ENCODE measurements at regions of chr10 and their contacts with region 1.

Region 1: GRCh38 chr10:28250782-28251181 is 52.1 kb downstream of the MPP7 start:
- DNase-seq: no peak
- H3K4me3 ChIP-seq: no peak overlapping the region
- H3K27ac ChIP-seq: no peak overlapping the region
- H3K4me1 ChIP-seq: no peaks in the 10 kb centered on the region
- H3K27me3 ChIP-seq: no peaks in the 10 kb centered on the region
- CTCF ChIP-seq: peak in 2 of 3 donors; percentile 56 to 57
- EP300 ChIP-seq: no peak
- POLR2A ChIP-seq: no peak

Region 2: DNA sequence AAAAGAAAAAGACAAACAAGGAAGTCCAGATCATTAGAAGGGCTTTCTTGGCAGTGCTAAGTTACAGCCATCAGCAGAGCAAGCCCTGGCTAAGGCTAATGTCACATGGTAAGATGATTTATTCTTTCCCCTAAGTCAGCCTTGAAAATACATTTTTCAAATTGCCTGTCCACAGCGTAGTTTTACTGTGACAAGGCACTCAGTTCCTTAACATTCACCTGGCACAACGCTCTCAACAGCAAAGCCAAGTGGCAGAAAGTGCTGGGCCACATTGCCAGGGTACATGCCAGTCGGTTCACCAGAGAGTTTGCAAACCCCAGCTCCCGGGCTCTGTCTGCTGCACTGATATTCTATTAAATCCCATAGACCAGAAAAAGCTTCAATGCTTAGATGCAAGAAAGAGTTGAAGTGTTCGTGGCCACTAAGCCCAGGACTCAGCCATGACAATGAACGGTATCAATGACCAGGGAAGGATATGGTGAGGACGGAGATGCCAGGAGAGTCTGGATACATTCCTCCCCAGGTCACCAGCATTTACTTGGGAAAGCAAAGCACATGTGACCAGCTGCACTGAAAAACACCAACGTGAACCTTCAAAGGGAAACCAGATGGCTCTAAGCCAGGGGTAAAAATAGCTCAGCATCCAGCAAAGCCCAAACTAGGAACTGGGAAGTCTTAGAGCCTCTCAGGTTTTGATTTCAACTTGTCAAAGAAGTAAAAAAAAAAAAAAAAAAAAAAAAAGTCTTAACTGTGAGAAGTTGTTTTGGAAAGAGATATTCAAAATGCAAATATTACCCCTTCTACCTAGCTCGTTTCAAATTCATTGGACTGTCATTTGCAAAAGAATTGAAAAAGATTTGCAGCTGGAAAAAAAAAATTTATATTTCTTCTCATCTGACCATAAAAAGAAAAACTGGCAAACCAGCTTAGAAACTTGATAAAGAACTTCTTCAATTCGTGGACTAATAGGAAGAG is 76.0 kb after region 1 on chr10:
- intact Hi-C with region 1: no loop called
- DNase-seq: peak in 4 of 5 donors; percentile 25 to 68 (median 34)
- H3K4me3 ChIP-seq: no peak overlapping the region
- H3K27ac ChIP-seq: peak overlapping the region; percentile 13 to 41
- H3K4me1 ChIP-seq: peaks cover 5% of the 10 kb centered on the region
- H3K27me3 ChIP-seq: no peaks in the 10 kb centered on the region
- CTCF ChIP-seq: no peak
- EP300 ChIP-seq: no peak
- POLR2A ChIP-seq: no peak

Region 3: DNA sequence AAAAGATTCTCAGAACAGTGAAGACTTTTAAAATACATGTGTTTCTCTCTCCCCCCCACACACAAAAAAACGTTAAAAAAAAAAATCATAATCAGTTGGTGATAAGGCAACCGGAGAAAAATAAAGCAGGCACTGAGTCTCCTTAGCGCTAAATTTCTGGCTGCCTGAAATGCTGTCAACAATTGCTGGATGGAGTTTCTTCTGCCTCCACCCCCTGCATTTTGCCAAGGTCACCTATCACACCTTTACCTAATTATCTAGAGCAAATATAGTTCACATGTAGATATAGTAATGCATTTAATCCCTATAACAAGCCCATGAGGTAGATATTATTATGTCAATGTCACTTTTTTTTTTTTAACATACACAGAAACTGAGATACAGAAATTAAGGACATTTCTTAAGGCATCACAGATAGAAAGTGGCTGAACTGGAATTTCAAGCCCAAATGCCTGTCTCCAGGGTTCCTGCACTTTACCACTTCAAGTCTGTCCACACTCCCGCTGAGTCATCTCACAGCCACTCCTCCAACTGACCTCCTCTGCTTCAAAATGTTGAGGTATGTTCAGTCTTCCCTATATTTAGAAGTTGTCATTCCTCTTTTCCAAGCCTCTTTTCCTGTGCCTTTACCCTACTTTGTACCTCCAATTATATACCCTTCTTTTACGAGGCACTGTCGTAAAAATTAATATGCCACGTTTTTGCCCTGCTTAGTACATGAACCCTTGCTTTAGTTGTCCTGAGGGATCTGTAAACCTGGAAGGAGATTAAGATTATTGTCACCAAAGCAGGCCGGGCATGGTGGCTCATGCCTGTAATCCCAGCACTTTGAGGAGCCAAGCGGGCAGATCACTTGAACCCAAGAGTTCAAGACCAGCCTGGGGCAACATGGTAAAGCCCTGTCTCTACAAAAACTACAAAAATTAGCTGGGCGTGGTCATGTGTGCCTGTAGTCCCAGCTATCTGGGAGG is 124.9 kb after region 1 on chr10:
- intact Hi-C with region 1: loop called (anchors 5 kb)
- DNase-seq: no peak
- H3K4me3 ChIP-seq: no peak overlapping the region
- H3K27ac ChIP-seq: no peak overlapping the region
- H3K4me1 ChIP-seq: no peaks in the 10 kb centered on the region
- H3K27me3 ChIP-seq: no peaks in the 10 kb centered on the region
- CTCF ChIP-seq: no peak
- EP300 ChIP-seq: no peak
- POLR2A ChIP-seq: no peak

Region 4: DNA sequence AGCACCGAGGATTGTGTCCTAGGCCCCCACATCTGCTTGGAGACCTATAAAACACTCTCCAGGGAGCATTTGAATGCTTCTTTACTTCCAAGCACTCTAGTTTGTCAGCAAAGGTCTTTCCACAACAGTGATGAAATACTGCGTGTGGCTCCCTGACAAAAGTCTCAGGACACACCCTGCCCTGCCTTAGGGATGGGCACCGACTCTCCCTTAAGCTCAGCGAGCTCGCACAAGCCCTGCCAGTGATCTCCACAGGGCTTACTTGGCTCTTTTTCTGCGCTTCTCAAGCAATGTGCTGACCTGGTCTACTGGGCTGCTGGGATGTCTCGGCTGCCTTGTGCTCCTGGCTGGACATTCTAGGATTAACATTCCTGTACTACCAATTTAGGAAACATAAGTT is 136.4 kb after region 1 on chr10:
- intact Hi-C with region 1: loop called (anchors 5 kb)
- DNase-seq: no peak
- H3K4me3 ChIP-seq: no peak overlapping the region
- H3K27ac ChIP-seq: no peak overlapping the region
- H3K4me1 ChIP-seq: no peaks in the 10 kb centered on the region
- H3K27me3 ChIP-seq: no peaks in the 10 kb centered on the region
- CTCF ChIP-seq: no peak
- EP300 ChIP-seq: no peak
- POLR2A ChIP-seq: no peak